ENCODE measurements at regions of chr16 and their contacts with region 1.

Region 1: GRCh38 chr16:75647492-75648264 is at the starts of genes KARS1 and TERF2IP:
- DNase-seq: peak; percentile 95
- ATAC-seq: peak; percentile 93
- H3K4me3 Mint-ChIP-seq: peak within 1 kb of the TSS; percentile 99
- H3K27ac Mint-ChIP-seq: peak within 1 kb of the TSS; percentile 98
- H3K4me1 Mint-ChIP-seq: peaks cover 53% of the 10 kb centered on the region
- H3K27me3 Mint-ChIP-seq: no peaks in the 10 kb centered on the region
- total RNA-seq, gene KARS1: 173 to 175 TPM
- total RNA-seq, gene TERF2IP: 78.6 to 79.4 TPM

Region 2: DNA sequence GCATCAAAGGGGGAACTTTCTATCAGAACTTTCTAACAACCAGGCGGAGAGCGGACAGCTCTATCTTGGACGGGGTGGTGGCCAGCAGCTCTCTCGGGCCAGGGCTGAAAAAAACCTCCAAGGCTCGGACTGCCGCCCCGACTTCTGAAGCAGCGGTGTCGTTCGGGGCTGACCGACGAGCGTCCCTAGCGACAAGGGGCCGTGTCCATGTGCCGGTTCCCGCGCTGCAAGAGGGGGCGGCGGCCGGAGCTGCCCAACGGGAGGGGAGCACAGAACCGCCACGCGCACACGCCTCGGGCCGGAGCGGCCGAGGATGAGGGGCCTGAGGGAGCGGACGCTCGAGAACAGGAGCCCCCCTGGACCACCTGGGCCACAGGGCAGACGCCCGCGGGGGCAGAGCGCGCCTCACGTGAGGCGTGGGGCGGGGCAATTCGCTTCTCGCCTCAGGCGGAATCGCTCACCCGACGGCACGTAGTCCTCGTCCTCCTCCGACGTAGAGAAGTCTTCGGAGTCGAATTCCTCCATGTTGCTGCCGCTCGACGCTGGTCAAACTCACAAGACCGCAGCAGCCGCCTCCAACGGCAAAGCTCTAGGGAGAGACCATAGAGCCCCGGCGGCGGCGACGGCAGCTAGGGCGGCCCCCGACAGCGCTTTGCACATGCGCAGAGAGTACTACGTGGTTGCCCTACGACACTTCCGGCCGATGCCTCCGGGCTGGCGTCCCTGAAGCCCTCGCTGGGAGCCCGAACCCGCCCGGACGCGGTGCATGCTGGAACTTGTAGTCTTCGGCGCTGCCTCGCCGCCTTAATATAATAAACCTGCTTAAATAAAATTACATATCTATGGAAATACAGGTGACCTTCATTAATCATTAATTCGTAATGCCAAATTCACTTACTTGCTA is 214.6 kb before region 1 on chr16 and contains the start of gene CFDP1:
- POLR2A ChIA-PET with region 1: interaction called, 23 read pairs
- DNase-seq: peak; percentile 93
- ATAC-seq: peak; percentile 93
- H3K4me3 Mint-ChIP-seq: peak within 1 kb of the TSS; percentile 90
- H3K27ac Mint-ChIP-seq: peak within 1 kb of the TSS; percentile 91
- H3K4me1 Mint-ChIP-seq: peaks cover 24% of the 10 kb centered on the region
- H3K27me3 Mint-ChIP-seq: peaks cover 3% of the 10 kb centered on the region
- total RNA-seq, gene CFDP1: 47.8 to 49.4 TPM

Region 3: DNA sequence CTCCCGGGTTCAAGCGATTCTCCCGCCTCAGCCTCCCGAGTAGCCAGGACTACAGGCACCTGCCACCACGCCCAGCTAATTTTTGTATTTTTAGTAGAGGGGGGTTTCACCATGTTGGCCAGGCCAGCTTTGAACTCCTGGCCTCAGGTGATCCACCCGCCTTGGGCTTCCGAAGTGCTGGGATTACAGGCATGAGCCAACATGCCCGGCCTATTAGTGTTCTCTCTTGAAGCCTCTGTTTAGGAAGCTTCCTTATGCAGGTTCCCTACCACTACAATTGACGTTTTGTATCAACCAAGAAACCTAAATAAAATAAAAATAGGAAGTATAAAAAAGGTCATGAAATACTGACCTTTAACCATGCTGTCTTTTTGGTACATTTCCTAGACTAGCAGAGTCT is 127.8 kb before region 1 on chr16:
- POLR2A ChIA-PET with region 1: interaction called, 13 read pairs
- DNase-seq: no peak
- ATAC-seq: no peak
- H3K4me3 Mint-ChIP-seq: no peak overlapping the region
- H3K27ac Mint-ChIP-seq: no peak overlapping the region
- H3K4me1 Mint-ChIP-seq: peaks cover 8% of the 10 kb centered on the region
- H3K27me3 Mint-ChIP-seq: peaks cover 3% of the 10 kb centered on the region

Region 4: DNA sequence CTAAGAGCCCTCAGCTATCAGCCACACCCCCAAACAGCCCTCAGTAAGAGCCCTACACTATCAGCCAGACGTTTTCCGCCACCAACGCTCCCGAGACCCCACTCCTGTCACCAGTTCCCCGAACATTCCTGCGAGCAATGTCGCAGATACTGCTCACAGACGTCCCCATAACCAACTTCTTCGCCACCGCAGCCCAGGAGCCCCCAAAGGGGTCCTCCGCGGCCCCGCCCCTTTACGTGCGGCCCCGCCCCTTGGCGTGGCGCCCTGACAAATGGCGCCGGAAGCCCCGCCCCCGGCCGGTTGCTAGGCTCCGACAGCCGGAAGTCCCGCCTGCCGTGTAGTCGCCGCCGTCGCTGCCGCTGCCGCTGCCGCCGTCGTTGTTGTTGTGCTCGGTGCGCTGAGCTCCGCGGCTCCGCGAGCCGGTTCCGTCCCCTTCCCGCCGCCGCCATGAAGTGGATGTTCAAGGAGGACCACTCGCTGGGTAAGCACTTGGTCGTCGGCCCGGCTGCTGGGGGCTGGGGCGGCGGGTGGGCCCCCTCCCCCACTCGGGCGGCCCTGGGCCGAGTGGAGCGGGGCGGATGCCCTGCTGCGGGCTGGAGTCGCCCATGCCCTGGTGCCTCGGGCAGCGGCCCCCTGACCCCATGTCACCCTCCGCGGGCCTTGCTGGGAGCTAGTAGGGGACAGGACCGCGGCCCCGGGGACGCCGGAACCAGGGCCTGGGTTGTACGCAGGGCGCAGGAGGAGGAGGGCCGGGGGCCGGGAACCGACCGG is 81.5 kb before region 1 on chr16 and contains the start of gene GABARAPL2:
- POLR2A ChIA-PET with region 1: interaction called, 32 read pairs
- DNase-seq: peak; percentile 98
- ATAC-seq: peak; percentile 76
- H3K4me3 Mint-ChIP-seq: peak within 1 kb of the TSS; percentile 93
- H3K27ac Mint-ChIP-seq: peak within 1 kb of the TSS; percentile 91
- H3K4me1 Mint-ChIP-seq: peaks cover 18% of the 10 kb centered on the region
- H3K27me3 Mint-ChIP-seq: peaks cover 19% of the 10 kb centered on the region
- total RNA-seq, gene GABARAPL2: 71.6 to 72.9 TPM

Region 5: DNA sequence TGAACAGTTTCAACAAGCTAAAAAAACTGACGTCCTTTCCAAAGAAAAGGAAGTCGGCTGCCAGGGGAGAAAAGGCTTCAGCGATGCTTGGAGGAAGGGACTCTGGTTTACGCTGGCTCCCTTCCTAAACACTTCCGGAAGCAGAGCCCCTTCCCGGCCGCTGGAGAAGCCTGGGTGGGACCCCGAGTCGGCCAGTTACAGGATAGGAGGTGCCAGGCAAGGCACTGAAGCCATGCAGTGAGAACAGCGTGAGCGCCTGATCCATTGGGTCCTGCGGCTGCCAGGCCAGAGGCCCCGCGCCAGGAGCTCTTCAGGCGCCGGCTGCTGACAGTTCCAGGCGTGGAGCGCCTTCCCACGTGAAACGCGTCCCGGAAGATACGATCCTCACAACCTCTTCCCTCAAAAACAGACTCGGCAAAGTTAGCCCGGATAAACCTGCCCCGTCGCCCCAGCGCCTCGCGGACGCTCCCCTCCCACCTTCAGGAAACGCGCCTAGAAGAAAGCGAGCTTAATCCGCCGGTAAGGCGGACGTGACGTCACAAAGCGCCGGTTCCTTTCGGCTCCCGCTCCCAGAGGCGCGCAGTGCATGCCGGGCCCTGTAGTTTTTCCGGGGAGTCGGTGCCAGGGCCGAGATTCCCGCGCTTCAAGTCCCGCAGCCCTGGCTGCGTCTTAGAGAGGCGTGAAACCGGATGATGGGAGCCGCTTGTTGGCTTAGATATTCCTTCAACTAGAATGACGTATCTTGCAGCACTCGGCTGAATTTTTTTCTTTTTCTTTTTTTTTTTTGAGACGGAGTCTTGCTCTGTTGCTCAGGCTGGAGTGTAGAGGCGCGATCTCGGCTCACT is 24.7 kb before region 1 on chr16 and contains the start of gene ADAT1:
- POLR2A ChIA-PET with region 1: interaction called, 95 read pairs
- DNase-seq: peak; percentile 95
- ATAC-seq: peak; percentile 95
- H3K4me3 Mint-ChIP-seq: peak within 1 kb of the TSS; percentile 97
- H3K27ac Mint-ChIP-seq: peak within 1 kb of the TSS; percentile 97
- H3K4me1 Mint-ChIP-seq: peaks cover 37% of the 10 kb centered on the region
- H3K27me3 Mint-ChIP-seq: no peaks in the 10 kb centered on the region
- total RNA-seq, gene ADAT1: 66.1 to 72.1 TPM

Region 6: DNA sequence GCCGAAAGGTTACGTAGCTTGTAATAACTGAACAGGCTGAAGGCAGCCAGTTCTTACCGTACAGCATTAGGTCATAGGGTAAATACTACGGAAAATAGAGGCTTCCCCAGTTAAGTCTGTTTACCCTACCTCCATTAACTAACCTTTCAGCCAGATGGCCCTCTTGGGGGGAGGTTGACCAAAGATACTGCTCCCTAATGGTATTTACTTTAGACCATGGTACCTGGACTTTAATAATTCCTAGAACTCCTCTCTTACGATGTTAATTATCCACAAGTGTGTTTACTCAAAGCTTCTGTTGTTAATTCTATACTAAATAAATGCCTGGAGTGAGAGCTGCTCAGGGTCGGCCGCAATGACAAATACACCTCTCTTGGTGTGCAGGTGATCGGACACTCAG is 14.8 kb before region 1 on chr16:
- POLR2A ChIA-PET with region 1: interaction called, 13 read pairs
- DNase-seq: no peak
- ATAC-seq: no peak
- H3K4me3 Mint-ChIP-seq: no peak overlapping the region
- H3K27ac Mint-ChIP-seq: no peak overlapping the region
- H3K4me1 Mint-ChIP-seq: peaks cover 25% of the 10 kb centered on the region
- H3K27me3 Mint-ChIP-seq: no peaks in the 10 kb centered on the region

Region 7: GRCh38 chr16:75660726-75661302 is 13.1 kb after region 1 on chr16:
- POLR2A ChIA-PET with region 1: interaction called, 16 read pairs
- DNase-seq: no peak
- ATAC-seq: no peak
- H3K4me3 Mint-ChIP-seq: no peak overlapping the region
- H3K27ac Mint-ChIP-seq: no peak overlapping the region
- H3K4me1 Mint-ChIP-seq: peaks cover 4% of the 10 kb centered on the region
- H3K27me3 Mint-ChIP-seq: no peaks in the 10 kb centered on the region

Region 8: DNA sequence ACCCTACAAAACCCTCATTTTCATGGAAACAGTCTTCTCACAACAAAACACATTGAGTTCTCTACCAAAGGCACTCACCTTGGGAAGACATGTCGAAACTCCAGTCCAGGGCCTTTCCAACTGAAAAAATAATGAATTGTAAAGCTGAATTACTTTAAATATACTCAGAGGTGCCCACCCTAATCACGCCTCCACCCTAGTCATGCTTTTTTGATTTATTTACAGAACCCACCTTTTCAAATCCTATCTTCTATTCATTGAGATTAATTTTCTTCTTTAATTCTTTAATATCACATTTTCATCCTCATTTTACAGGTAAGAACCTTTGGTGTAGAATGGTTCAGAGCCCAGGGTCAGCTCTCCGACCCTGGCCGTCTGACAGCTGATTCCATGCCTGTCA is 29.2 kb after region 1 on chr16 and contains the start of gene CPHXL2:
- POLR2A ChIA-PET with region 1: no interaction called
- DNase-seq: no peak
- ATAC-seq: no peak
- H3K4me3 Mint-ChIP-seq: no peak within 1 kb of the TSS
- H3K27ac Mint-ChIP-seq: no peak within 1 kb of the TSS
- H3K4me1 Mint-ChIP-seq: no peaks in the 10 kb centered on the region
- H3K27me3 Mint-ChIP-seq: no peaks in the 10 kb centered on the region
- total RNA-seq, gene CPHXL2: not detected

Measured in activated naive CD8-positive, alpha-beta T cell treated with anti-CD3 and anti-CD28 coated beads, Interleukin-2, amount 10 ng/mL, durations not matched to agents 7 days and 5 days (primary cell).